HCT116 (cell line): ENCODE measurements at regions of chr12 and their contacts with region 1.

Region 1: DNA sequence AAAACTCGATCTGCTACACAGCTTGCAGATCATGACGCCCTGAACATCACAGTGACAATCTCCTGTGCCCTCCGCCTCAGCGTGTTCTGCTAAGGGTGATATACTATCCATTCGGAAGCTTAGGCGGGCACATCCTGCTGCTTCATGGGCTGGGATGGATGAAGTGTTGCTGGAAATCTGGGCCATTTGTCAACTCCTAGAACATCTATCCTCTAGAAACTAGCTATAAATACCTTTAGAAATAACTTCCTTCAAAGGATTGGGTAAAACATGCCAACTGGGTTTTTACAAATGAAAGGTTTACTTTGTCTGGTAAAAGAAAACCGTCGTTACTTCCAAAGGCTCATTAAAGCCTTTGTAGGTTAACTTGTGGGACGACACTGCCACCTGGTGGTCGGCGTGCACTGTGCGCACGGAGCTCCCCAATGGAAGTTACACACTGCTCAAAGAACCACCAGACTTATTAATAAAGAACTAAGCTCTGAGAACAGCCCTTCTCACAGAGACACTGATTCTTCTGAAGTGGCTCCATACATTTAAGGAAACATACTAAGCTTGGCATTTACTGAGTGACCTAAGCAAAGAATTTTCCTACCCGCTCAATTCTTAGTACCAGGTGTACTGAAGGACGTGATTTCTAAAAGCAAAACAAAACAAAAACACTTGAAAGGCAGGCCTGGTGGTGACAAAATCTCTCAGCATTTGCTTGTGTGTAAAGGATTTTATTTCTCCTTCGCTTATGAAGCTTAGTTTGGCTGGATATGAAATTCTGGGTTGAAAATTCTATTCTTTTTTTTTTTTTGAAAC is 21.6 kb upstream of the CACNA2D4 start:
- DNase-seq: peak; percentile 52
- ATAC-seq: peak; percentile 95
- H3K4me3 ChIP-seq: no peak overlapping the region
- H3K27ac ChIP-seq: no peak overlapping the region
- H3K4me1 ChIP-seq: no peaks in the 10 kb centered on the region
- H3K27me3 ChIP-seq: no peaks in the 10 kb centered on the region
- CTCF ChIP-seq: peak; percentile 78 to 98 (median 89); a peak in 5 of 6 replicates
- POLR2A ChIP-seq: no peak
- RAD21 ChIP-seq: peak; percentile 87

Region 2: DNA sequence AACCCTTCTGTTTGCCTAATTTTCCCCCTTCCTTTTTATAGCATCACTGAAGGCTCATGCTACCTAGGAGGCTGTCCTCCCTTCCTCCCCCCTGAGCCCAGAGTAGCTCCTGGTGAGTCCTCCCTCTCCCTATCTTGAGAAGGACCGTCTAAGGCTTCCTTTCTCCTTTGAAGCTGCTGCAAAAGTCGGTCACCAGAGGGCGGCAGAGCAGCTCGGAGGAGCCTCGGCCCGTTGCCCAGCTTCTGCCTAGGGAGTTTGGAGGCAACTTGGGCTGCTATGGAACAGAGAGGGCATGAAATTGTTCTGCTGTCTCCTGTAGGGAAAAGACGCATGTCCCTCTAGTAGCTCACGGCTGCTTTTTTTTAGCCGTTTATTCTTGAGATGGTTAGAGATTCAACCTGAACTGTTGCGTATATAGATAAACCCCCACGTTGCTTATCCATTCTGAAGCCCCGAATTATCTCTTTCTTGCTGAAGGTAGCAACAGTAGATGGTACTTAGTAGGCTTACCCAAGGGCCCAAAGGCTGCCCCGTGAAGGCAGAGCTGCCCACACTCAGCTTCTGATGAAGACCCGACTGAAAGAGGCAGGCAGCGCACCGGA is 305.3 kb before region 1 on chr12:
- CTCF ChIA-PET with region 1: interaction called, 30 read pairs
- POLR2A ChIA-PET with region 1: no interaction called
- RAD21 ChIA-PET with region 1: interaction called, 5 to 10 read pairs
- intact Hi-C with region 1: loop called (anchors 1 kb)
- DNase-seq: peak; percentile 63
- ATAC-seq: peak; percentile 81
- H3K4me3 ChIP-seq: no peak overlapping the region
- H3K27ac ChIP-seq: no peak overlapping the region
- H3K4me1 ChIP-seq: peaks cover 0 to 15% of the 10 kb centered on the region in 2 experiments; a peak in 3 of 4 replicates
- H3K27me3 ChIP-seq: no peaks in the 10 kb centered on the region
- CTCF ChIP-seq: peak; percentile 78 to 93 (median 90)
- POLR2A ChIP-seq: no peak
- RAD21 ChIP-seq: peak; percentile 85

Region 3: DNA sequence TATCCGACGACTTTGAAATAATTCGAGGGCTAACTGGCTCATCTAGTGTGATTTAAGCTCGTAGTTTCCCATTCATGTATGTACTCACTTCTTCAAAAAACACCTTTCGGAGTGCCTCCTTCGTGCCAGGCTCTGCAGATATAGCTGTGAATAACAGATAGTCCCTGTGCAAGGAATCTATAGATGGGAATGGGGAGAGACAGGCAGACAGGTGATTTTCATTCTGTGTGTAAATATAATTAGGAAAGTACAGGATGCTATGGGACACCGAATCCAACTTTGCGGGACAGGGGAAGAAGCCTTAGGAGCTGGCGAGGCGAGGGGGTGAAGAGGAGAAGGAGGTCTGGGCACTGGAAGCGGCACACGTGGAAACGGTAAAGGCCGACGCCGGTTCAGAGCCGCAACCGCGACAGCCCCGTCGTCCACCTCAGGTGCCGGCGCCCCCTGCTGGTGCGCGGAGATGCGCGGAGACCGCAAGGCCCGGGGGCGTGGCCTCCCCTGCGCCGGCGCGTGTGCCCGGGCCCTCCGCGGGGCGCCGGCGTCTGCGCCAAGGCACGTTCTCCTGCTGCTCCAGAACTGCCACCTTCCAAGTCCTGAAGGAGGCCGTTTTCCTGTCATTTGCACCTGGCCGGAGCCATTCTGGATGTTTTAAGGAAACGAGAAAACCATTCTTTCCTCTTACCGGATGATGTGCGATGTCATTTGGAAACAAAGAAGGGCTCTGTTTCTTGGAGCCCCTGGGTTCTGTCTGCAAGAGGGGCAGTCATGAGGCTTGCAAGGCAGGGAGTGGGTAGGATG is 94.8 kb after region 1 on chr12:
- CTCF ChIA-PET with region 1: interaction called, 3 read pairs
- POLR2A ChIA-PET with region 1: no interaction called
- RAD21 ChIA-PET with region 1: no interaction called
- intact Hi-C with region 1: loop called (anchors 1 kb)
- DNase-seq: peak; percentile 60
- ATAC-seq: peak; percentile 98
- H3K4me3 ChIP-seq: peak overlapping the region; percentile 30 to 47
- H3K27ac ChIP-seq: no peak overlapping the region
- H3K4me1 ChIP-seq: peaks cover 5 to 11% of the 10 kb centered on the region in 2 experiments
- H3K27me3 ChIP-seq: peaks cover 38% of the 10 kb centered on the region; the same call in 1 of the 2 replicates
- CTCF ChIP-seq: peak; percentile 35 to 85 (median 82); a peak in 5 of 6 replicates
- POLR2A ChIP-seq: peak; percentile 67
- RAD21 ChIP-seq: peak; percentile 64